K562 (cell line): ENCODE measurements at regions of chr3 and their contacts with region 1.

Region 1: GRCh38 chr3:12175844-12176453 is 17.2 kb upstream of the TIMP4 start:
- DNase-seq: peak; percentile 67 to 72 (median 69)
- ATAC-seq: peak; percentile 98
- H3K4me3 ChIP-seq: no peak overlapping the region
- H3K27ac ChIP-seq: no peak overlapping the region
- H3K4me1 ChIP-seq: no peaks in the 10 kb centered on the region
- H3K27me3 ChIP-seq: peaks cover 0 to 4% of the 10 kb centered on the region in 2 experiments; a peak in 2 of 5 replicates
- CTCF ChIP-seq: peak; percentile 79 to 90 (median 90)
- EP300 ChIP-seq: no peak
- POLR2A ChIP-seq: no peak
- RAD21 ChIP-seq: peak; percentile 92 to 97

Region 2: GRCh38 chr3:11846281-11847034 is 329.5 kb before region 1 on chr3 and contains the start of gene TAMM41:
- CTCF ChIA-PET with region 1: no interaction called
- POLR2A ChIA-PET with region 1: no interaction called
- in situ Hi-C with region 1: no loop called
- intact Hi-C with region 1: loop called (anchors 5 kb)
- DNase-seq: peak; percentile 93 to 98 (median 94)
- ATAC-seq: peak; percentile 100
- H3K4me3 ChIP-seq: peak within 1 kb of the TSS; percentile 91
- H3K27ac ChIP-seq: peak within 1 kb of the TSS; percentile 86
- H3K4me1 ChIP-seq: peaks cover 7 to 10% of the 10 kb centered on the region in 2 experiments; a peak in 3 of 5 replicates
- H3K27me3 ChIP-seq: no peaks in the 10 kb centered on the region
- CTCF ChIP-seq: peak; percentile 90 to 98 (median 98)
- EP300 ChIP-seq: peak; percentile 34; the same call in 1 of the 2 replicates
- POLR2A ChIP-seq: peak; percentile 98
- RAD21 ChIP-seq: peak; percentile 37 to 51
- polyA plus RNA-seq, gene TAMM41: 69.0 to 74.6 TPM

Region 3: DNA sequence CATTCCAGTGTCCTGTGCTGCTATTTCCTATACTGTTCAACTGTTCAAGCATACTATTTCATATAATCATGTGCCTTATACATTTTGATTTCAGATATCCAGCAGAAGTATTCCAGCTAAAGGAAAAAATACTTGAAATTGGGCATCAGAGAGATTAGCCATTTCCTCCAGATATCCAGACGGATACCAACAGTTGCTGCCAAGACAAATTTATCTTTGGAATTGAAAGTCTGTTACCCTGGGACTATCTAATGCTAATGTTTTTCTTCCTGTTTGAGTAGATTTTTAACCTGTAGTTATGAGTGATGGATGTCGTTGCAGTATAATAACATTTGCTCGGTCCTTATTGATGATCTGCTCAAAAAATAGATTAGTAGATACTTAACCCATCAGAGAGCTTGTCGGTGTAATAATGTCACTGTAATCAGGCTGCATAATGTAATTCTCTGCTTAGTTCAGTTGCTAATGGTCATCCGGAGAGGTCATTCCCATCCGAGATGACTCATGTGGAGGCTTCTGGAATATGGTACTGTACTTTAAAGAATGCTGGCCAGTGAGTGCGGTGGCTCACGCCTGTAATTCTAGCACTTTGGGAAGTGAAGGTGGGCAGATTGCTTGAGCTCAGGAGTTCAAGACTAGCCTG is 68.8 kb before region 1 on chr3:
- CTCF ChIA-PET with region 1: no interaction called
- POLR2A ChIA-PET with region 1: no interaction called
- in situ Hi-C with region 1: no loop called
- intact Hi-C with region 1: no loop called
- DNase-seq: no peak
- ATAC-seq: no peak
- H3K4me3 ChIP-seq: no peak overlapping the region
- H3K27ac ChIP-seq: no peak overlapping the region
- H3K4me1 ChIP-seq: no peaks in the 10 kb centered on the region
- H3K27me3 ChIP-seq: no peaks in the 10 kb centered on the region
- CTCF ChIP-seq: no peak
- EP300 ChIP-seq: no peak
- POLR2A ChIP-seq: no peak
- RAD21 ChIP-seq: no peak

Region 4: GRCh38 chr3:12273045-12273695 is 97.2 kb after region 1 on chr3:
- CTCF ChIA-PET with region 1: no interaction called
- POLR2A ChIA-PET with region 1: no interaction called
- in situ Hi-C with region 1: no loop called
- intact Hi-C with region 1: no loop called
- DNase-seq: no peak
- ATAC-seq: no peak
- H3K4me3 ChIP-seq: no peak overlapping the region
- H3K27ac ChIP-seq: no peak overlapping the region
- H3K4me1 ChIP-seq: no peaks in the 10 kb centered on the region
- H3K27me3 ChIP-seq: peaks cover 5 to 20% of the 10 kb centered on the region in 2 experiments; a peak in 4 of 5 replicates
- CTCF ChIP-seq: no peak
- EP300 ChIP-seq: no peak
- POLR2A ChIP-seq: no peak
- RAD21 ChIP-seq: no peak